CD8-positive, alpha-beta memory T cell (primary cell): ENCODE measurements at regions of chr1 and their contacts with region 1.

Region 1: DNA sequence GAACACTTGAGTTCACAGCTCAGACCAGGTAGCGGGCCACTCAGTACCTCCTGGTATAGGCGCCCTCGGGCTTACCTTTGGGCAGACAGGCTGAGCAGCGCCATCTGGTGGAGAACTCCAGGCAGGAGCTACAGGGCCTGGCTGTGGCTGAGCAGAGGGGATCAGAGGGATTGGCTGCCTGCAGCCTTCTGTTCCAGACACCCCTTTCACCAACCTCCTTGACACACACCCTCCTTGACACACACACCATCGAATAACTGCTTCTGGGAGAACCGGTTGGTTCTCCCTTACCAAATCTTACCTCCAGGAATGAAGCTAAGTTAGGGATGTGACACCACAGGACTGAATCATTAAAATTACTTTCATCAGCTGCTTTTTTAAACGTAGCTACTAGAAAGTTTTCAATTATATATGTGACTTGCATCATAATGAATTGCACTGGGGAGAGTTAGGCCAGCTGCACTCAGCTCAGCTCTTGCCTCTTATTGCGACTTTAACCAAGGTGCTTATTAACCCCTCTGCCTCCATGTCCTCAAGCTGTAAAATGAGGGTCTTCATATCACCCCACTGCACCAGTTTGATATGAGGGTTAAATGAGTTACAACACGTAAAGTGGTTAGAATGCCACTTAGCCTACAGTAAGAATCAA is 6.6 kb downstream of the LIN28A start:
- DNase-seq: peak; percentile 70 to 88 (median 75)
- H3K4me3 ChIP-seq: no peak overlapping the region
- H3K4me3 Mint-ChIP-seq: no peak overlapping the region
- H3K27ac ChIP-seq: no peak overlapping the region
- H3K27ac Mint-ChIP-seq: peak overlapping the region in 1 of 8 donors; percentile 66
- H3K4me1 ChIP-seq: no peaks in the 10 kb centered on the region
- H3K4me1 Mint-ChIP-seq: peaks cover 0 to 1% (median 0%) of the 10 kb centered on the region in 3 donors
- H3K27me3 ChIP-seq: peaks cover 20% of the 10 kb centered on the region
- H3K27me3 Mint-ChIP-seq: peaks cover 21 to 35% of the 10 kb centered on the region in 2 donors

Region 2: GRCh38 chr1:26233903-26234643 is 183.2 kb before region 1 on chr1 and contains the start of gene CEP85:
- CTCF ChIA-PET with region 1: interaction called, 23 read pairs
- POLR2A ChIA-PET with region 1: no interaction called
- DNase-seq: peak; percentile 97 to 99 (median 98)
- H3K4me3 ChIP-seq: peak within 1 kb of the TSS; percentile 96
- H3K4me3 Mint-ChIP-seq: peak within 1 kb of the TSS; percentile 95 to 99 (median 97)
- H3K27ac ChIP-seq: peak within 1 kb of the TSS; percentile 89
- H3K27ac Mint-ChIP-seq: peak within 1 kb of the TSS; percentile 91 to 98 (median 96)
- H3K4me1 ChIP-seq: peaks cover 29% of the 10 kb centered on the region
- H3K4me1 Mint-ChIP-seq: peaks cover 29 to 38% (median 35%) of the 10 kb centered on the region in 3 donors
- H3K27me3 ChIP-seq: no peaks in the 10 kb centered on the region
- H3K27me3 Mint-ChIP-seq: peaks cover 0 to 5% of the 10 kb centered on the region in 2 donors
- total RNA-seq, gene CEP85: 28.8 to 29.7 TPM

Region 3: DNA sequence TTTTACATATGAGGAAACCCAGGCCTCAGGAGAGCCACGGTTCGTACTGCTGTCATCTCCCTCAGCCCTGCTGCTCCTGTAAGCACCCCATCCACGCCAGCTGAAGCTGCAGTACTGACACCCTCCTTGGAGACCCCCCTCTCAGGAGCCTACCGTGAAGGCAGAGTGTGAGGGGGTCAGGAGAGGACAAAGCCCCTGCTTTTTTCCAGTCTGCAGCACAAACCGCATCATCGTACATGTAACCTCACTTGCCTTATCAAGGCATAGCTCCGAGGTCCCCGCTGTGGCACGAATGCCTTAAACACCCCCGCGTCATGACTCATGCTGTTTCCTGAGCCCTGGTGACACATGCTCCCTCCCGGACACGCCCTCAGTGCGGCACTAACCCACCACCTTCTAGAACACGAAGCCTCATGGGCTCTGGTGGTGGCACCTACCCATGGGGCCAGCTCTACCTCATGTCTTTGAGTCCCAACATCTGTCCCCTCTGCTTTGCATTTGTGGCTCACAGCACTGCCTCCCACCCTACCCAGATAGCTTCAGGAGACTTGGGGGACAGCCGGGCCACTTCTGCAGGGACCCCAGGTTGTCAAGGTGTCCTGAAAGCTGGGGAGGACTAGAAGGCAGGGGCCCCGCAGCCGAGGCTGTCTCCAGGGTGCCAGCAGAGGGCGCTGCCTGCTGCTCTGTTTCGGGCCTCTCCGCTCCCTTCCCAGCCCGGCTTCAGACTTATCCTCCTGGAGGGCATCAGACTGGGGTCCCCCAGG is 132.5 kb before region 1 on chr1:
- CTCF ChIA-PET with region 1: interaction called, 27 read pairs
- POLR2A ChIA-PET with region 1: no interaction called
- DNase-seq: peak; percentile 86 to 97 (median 91)
- H3K4me3 ChIP-seq: peak overlapping the region; percentile 60
- H3K4me3 Mint-ChIP-seq: peak overlapping the region; percentile 68 to 94 (median 87)
- H3K27ac ChIP-seq: peak overlapping the region; percentile 60
- H3K27ac Mint-ChIP-seq: peak overlapping the region; percentile 92 to 100 (median 99)
- H3K4me1 ChIP-seq: peaks cover 93% of the 10 kb centered on the region
- H3K4me1 Mint-ChIP-seq: peaks cover 84 to 93% (median 87%) of the 10 kb centered on the region in 3 donors
- H3K27me3 ChIP-seq: no peaks in the 10 kb centered on the region
- H3K27me3 Mint-ChIP-seq: no peaks in the 10 kb centered on the region

Region 4: DNA sequence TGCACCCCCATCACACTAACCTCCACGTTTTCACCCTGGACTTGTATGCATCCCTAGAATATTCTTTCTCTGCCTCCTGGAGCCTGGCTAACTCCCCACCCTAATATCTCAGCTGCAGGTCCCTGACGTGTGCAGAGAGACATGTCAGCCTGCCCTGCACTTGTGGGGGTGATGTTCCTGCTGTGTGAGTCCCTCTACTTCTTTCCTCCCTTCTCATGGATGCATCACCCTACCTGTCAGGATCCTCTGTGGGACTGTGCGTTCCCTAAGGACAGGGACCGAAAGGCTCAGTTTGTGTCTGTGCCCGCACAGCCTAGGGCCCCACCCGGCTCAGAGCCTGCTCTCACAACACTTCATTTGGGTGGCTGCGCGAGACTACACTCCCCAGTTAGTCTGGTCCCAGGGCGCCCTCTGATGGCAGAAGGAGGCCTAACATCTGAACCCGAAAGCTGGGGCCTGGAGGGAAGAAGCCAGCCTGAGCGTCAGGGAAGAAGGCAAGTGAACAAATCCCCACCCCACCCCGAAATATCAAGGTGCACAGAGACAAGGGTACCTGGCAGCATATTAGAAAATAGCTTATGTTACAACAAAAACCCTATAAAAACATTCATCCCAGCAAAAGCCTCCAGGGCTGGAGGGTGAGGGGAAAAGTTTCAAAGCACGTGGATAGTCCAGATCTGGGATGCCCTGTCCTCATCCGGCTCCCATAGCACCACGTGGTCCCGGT is 95.8 kb before region 1 on chr1:
- CTCF ChIA-PET with region 1: interaction called, 17 read pairs
- POLR2A ChIA-PET with region 1: interaction called, 6 read pairs
- DNase-seq: peak; percentile 85 to 94 (median 90)
- H3K4me3 ChIP-seq: peak overlapping the region; percentile 93
- H3K4me3 Mint-ChIP-seq: peak overlapping the region; percentile 75 to 99 (median 91)
- H3K27ac ChIP-seq: no peak overlapping the region
- H3K27ac Mint-ChIP-seq: peak overlapping the region; percentile 41 to 100 (median 95)
- H3K4me1 ChIP-seq: peaks cover 46% of the 10 kb centered on the region
- H3K4me1 Mint-ChIP-seq: peaks cover 47 to 63% (median 53%) of the 10 kb centered on the region in 3 donors
- H3K27me3 ChIP-seq: no peaks in the 10 kb centered on the region
- H3K27me3 Mint-ChIP-seq: peaks cover 0 to 2% of the 10 kb centered on the region in 2 donors

Region 5: GRCh38 chr1:26363549-26364448 is 53.4 kb before region 1 on chr1:
- CTCF ChIA-PET with region 1: interaction called, 17 read pairs
- POLR2A ChIA-PET with region 1: interaction called, 4 read pairs
- DNase-seq: peak; percentile 75 to 87 (median 78)
- H3K4me3 ChIP-seq: no peak overlapping the region
- H3K4me3 Mint-ChIP-seq: peak overlapping the region in 5 of 7 donors; percentile 4 to 72 (median 61)
- H3K27ac ChIP-seq: no peak overlapping the region
- H3K27ac Mint-ChIP-seq: peak overlapping the region in 5 of 8 donors; percentile 18 to 59 (median 32)
- H3K4me1 ChIP-seq: peaks cover 46% of the 10 kb centered on the region
- H3K4me1 Mint-ChIP-seq: peaks cover 60 to 84% (median 66%) of the 10 kb centered on the region in 3 donors
- H3K27me3 ChIP-seq: peaks cover 14% of the 10 kb centered on the region
- H3K27me3 Mint-ChIP-seq: peaks cover 11 to 25% of the 10 kb centered on the region in 2 donors

Region 6: GRCh38 chr1:26378088-26378878 is 39.0 kb before region 1 on chr1:
- CTCF ChIA-PET with region 1: interaction called, 14 read pairs
- POLR2A ChIA-PET with region 1: no interaction called
- DNase-seq: peak; percentile 79 to 95 (median 81)
- H3K4me3 ChIP-seq: peak overlapping the region; percentile 47
- H3K4me3 Mint-ChIP-seq: peak overlapping the region; percentile 46 to 85 (median 75)
- H3K27ac ChIP-seq: peak overlapping the region; percentile 75
- H3K27ac Mint-ChIP-seq: peak overlapping the region; percentile 80 to 97 (median 94)
- H3K4me1 ChIP-seq: peaks cover 70% of the 10 kb centered on the region
- H3K4me1 Mint-ChIP-seq: peaks cover 67 to 79% (median 71%) of the 10 kb centered on the region in 3 donors
- H3K27me3 ChIP-seq: no peaks in the 10 kb centered on the region
- H3K27me3 Mint-ChIP-seq: peaks cover 0 to 3% of the 10 kb centered on the region in 2 donors

Region 7: DNA sequence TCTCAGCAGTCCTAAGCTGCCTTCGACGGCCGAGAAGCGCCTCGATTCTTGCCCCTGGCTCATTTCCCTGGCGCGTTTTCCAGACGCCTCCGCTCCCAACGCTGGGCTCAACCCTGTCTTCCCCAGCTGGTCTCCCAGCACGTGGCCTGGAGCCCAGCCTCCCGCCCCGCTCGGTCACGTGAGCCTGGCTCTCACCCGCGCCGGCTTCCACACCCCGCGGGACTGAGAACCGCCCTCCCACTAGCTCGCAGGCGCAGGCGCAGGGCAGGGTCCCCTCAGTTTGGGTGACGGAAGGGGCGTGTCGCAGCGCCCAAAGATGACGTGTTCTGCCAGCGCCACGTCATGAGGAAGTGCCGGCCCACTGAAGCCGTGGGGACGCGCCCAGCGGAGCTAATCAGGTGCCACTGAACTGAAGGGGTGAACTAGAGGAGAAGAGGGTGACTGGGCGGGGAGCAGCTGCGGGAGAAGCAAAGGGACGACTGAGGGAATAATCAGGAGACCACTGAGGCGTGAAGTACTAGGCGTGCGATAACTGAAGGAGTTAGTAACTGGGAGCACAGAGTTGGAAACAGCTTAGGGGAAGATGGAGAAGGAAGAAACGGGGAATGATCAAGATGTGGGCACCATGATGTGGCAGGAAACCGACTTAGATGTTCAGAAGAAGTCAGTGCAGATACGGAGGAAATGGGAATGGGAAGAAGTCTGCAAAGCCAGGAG is 14.9 kb after region 1 on chr1 and contains the start of gene DHDDS:
- CTCF ChIA-PET with region 1: interaction called, 23 read pairs
- POLR2A ChIA-PET with region 1: interaction called, 4 read pairs
- DNase-seq: peak; percentile 96 to 98 (median 97)
- H3K4me3 ChIP-seq: peak within 1 kb of the TSS; percentile 69
- H3K4me3 Mint-ChIP-seq: peak within 1 kb of the TSS; percentile 90 to 98 (median 94)
- H3K27ac ChIP-seq: peak within 1 kb of the TSS; percentile 70
- H3K27ac Mint-ChIP-seq: peak within 1 kb of the TSS; percentile 75 to 99 (median 96)
- H3K4me1 ChIP-seq: peaks cover 19% of the 10 kb centered on the region
- H3K4me1 Mint-ChIP-seq: peaks cover 19 to 24% (median 24%) of the 10 kb centered on the region in 3 donors
- H3K27me3 ChIP-seq: no peaks in the 10 kb centered on the region
- H3K27me3 Mint-ChIP-seq: peaks cover 0 to 6% of the 10 kb centered on the region in 2 donors
- total RNA-seq, gene DHDDS: 47.9 to 52.2 TPM